ENCODE measurements at regions of chr18 and their contacts with region 1.

Region 1: DNA sequence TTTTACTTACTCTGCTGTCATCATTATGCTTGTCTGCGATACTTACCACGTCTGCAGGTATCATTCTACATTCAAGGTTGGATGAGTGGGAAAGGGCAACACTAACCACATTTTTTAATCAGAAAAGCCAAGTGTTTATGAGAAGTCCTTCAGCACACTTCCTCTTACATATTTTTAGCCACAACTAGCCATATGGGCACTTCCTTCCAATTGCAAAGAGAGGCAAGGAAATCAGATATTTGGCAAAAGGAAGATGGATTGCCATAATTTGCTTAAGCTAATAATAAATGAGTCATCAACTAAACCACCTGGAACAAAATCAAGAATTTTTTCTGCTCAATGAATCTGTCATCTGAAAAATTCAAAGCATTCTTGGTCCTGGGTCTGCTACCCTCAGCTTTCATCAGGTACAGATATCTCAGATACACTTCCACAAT is 16.7 kb upstream of the MRO start:
- DNase-seq: peak; percentile 84
- H3K4me3 ChIP-seq: no peak overlapping the region
- H3K27ac ChIP-seq: no peak overlapping the region
- H3K4me1 ChIP-seq: peaks cover 12% of the 10 kb centered on the region
- H3K27me3 ChIP-seq: peaks cover 0 to 3% of the 10 kb centered on the region in 2 experiments
- CTCF ChIP-seq: no peak
- POLR2A ChIP-seq: no peak

Region 2: DNA sequence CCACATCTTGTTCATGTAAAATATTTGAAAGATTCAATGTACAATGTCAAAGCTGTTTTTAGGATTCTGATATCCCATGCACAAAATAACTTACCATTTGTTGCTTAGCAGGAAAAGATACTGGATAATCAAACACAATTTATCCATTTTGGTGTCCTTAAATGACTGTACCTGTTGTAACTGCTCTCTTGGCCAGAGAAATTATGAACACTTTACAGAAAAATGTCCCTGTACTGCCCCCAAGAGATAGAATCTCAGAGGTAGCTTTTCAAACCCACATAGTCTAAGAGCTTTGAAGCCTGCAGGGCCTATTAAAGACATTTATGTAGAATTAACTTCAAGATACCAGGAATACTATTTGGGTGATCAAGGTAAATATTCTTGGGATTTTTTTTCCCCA is 30.2 kb after region 1 on chr18:
- CTCF ChIA-PET with region 1: interaction called, 3 read pairs
- POLR2A ChIA-PET with region 1: no interaction called
- dilution Hi-C with region 1: no loop called
- intact Hi-C with region 1: loop called (anchors 1 kb)
- DNase-seq: peak; percentile 12
- H3K4me3 ChIP-seq: no peak overlapping the region
- H3K27ac ChIP-seq: no peak overlapping the region
- H3K4me1 ChIP-seq: peaks cover 3% of the 10 kb centered on the region
- H3K27me3 ChIP-seq: peaks cover 0 to 3% of the 10 kb centered on the region in 2 experiments
- CTCF ChIP-seq: no peak
- POLR2A ChIP-seq: no peak